GM12878 (cell line): ENCODE measurements at regions of chr18 and their contacts with region 1.

Region 1: DNA sequence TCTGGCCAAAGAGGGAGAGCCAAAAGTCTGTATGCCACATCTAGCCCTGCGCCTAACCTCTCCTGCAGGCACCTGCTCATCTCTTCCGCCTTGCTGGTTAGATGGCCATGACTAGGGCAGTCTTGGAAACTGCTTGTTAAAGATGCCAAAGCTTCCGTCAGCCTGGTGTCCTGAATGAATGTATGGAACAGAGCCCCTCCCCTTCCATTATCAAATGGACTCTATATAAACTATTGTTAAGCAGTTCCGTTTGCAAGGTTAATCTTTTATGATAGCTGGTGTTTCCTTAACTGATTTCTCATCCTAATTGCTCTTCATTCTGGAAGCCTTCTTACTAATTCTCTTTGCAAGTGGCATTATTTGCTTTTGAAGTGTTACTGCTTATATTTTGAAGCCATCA is 87.1 kb downstream of the ATP9B start:
- DNase-seq: no peak
- ATAC-seq: no peak
- H3K4me3 ChIP-seq: no peak overlapping the region
- H3K27ac ChIP-seq: no peak overlapping the region
- H3K4me1 ChIP-seq: peaks cover 10% of the 10 kb centered on the region
- H3K27me3 ChIP-seq: no peaks in the 10 kb centered on the region
- CTCF ChIP-seq: no peak
- EP300 ChIP-seq: no peak
- POLR2A ChIP-seq: no peak
- RAD21 ChIP-seq: no peak

Region 2: DNA sequence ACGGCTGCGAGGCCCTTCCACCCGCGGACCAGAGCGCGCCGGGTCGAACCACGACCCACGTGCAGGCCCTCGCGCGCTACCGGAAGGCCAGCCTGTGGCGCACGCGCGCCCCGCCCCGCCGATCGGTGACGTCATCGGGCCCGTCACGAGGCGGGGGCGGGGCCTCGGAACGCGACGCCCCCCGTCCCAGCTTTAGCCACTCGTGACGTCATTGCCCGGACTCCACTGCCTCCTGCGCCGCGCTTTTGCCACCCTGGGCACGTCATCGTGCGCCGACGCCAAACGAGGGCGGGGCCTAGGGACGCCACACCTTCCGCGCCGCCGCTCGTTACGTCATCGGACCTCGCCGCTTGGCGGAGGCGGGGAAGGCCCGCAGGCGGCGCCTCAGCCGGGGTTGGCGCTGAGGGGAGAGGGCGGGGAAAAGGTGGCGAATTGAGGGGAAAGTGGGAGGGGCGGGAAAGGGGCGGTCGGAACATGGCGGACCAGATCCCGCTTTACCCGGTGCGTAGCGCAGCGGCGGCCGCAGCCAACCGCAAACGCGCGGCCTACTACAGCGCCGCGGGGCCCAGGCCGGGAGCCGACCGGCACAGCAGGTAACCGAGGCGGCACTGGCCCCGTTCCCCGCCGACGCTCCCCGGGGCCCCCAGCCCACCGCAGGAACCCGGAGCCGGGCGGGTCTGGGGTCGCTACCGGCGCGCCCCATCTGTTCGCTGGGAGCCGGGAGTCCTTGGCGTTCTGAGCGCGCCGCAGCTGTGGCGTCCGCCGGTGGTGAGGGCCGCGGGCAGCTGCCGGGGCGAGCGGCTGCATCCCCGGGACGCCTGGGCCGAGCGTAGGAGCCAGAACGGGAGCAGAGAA is 87.2 kb before region 1 on chr18 and contains the start of gene ATP9B:
- CTCF ChIA-PET with region 1: no interaction called
- POLR2A ChIA-PET with region 1: interaction called, 3 read pairs
- RAD21 ChIA-PET with region 1: interaction called, 3 read pairs
- SMC1A ChIA-PET with region 1: interaction called, 4 read pairs
- in situ Hi-C with region 1: no loop called
- intact Hi-C with region 1: loop called (anchors 2 kb)
- DNase-seq: peak; percentile 88
- ATAC-seq: peak; percentile 95
- H3K4me3 ChIP-seq: peak within 1 kb of the TSS; percentile 80
- H3K27ac ChIP-seq: peak within 1 kb of the TSS; percentile 84
- H3K4me1 ChIP-seq: no peaks in the 10 kb centered on the region; the same call in 1 of the 2 replicates
- H3K27me3 ChIP-seq: no peaks in the 10 kb centered on the region
- CTCF ChIP-seq: no peak
- EP300 ChIP-seq: peak in 1 of 2 experiments; percentile 67; a peak in 1 of 4 replicates
- POLR2A ChIP-seq: peak; percentile 90
- RAD21 ChIP-seq: no peak
- polyA plus RNA-seq, gene ATP9B: 0.74 to 1.1 TPM